ENCODE measurements at regions of chr7 and their contacts with region 1.

Region 1: DNA sequence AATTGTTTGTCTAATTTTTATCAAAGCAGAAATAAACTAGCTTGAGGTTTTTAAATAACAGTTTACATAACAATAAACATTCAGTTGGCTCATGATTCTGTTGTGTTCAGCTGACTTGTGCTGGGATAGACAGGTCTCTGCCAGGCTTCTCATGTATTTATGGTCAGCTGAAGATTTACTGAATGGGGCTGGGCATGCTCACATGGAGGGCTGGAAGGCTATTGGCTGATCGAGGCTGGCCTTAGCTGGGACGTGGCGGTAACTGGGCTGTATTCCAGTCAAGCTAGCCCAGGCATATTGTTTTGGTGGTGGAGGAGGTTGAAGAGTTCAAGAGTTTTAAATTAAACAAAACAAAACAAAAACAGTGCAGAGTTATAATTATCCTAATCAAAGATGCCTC is 251.0 kb upstream of the MTPN start:
- DNase-seq: no peak
- ATAC-seq: no peak
- H3K4me3 ChIP-seq: no peak overlapping the region
- H3K4me3 Mint-ChIP-seq: no peak overlapping the region
- H3K27ac ChIP-seq: no peak overlapping the region
- H3K27ac Mint-ChIP-seq: no peak overlapping the region
- H3K4me1 ChIP-seq: no peaks in the 10 kb centered on the region
- H3K4me1 Mint-ChIP-seq: no peaks in the 10 kb centered on the region
- H3K27me3 ChIP-seq: no peaks in the 10 kb centered on the region
- H3K27me3 Mint-ChIP-seq: no peaks in the 10 kb centered on the region
- CTCF ChIP-seq: no peak

Region 2: GRCh38 chr7:136179851-136180721 is 48.1 kb before region 1 on chr7:
- intact Hi-C with region 1: no loop called
- DNase-seq: no peak
- ATAC-seq: no peak
- H3K4me3 ChIP-seq: no peak overlapping the region
- H3K4me3 Mint-ChIP-seq: no peak overlapping the region
- H3K27ac ChIP-seq: no peak overlapping the region
- H3K27ac Mint-ChIP-seq: no peak overlapping the region
- H3K4me1 ChIP-seq: no peaks in the 10 kb centered on the region
- H3K4me1 Mint-ChIP-seq: peaks cover 5 to 15% of the 10 kb centered on the region in 2 donors
- H3K27me3 ChIP-seq: no peaks in the 10 kb centered on the region
- H3K27me3 Mint-ChIP-seq: no peaks in the 10 kb centered on the region
- CTCF ChIP-seq: no peak

Region 3: GRCh38 chr7:136293272-136293671 is 65.1 kb after region 1 on chr7:
- intact Hi-C with region 1: loop called (anchors 10 kb)
- DNase-seq: no peak
- ATAC-seq: no peak
- H3K4me3 ChIP-seq: no peak overlapping the region
- H3K4me3 Mint-ChIP-seq: no peak overlapping the region
- H3K27ac ChIP-seq: no peak overlapping the region
- H3K27ac Mint-ChIP-seq: no peak overlapping the region
- H3K4me1 ChIP-seq: no peaks in the 10 kb centered on the region
- H3K4me1 Mint-ChIP-seq: no peaks in the 10 kb centered on the region
- H3K27me3 ChIP-seq: no peaks in the 10 kb centered on the region
- H3K27me3 Mint-ChIP-seq: no peaks in the 10 kb centered on the region
- CTCF ChIP-seq: no peak